Head of caudate nucleus (tissue), 42 donors: ENCODE measurements at regions of chr1 and their contacts with region 1.

Region 1: GRCh38 chr1:61043010-61043820 is 39.1 kb upstream of the NFIA start:
- DNase-seq: peak; percentile 77 to 96 (median 90)

Region 2: DNA sequence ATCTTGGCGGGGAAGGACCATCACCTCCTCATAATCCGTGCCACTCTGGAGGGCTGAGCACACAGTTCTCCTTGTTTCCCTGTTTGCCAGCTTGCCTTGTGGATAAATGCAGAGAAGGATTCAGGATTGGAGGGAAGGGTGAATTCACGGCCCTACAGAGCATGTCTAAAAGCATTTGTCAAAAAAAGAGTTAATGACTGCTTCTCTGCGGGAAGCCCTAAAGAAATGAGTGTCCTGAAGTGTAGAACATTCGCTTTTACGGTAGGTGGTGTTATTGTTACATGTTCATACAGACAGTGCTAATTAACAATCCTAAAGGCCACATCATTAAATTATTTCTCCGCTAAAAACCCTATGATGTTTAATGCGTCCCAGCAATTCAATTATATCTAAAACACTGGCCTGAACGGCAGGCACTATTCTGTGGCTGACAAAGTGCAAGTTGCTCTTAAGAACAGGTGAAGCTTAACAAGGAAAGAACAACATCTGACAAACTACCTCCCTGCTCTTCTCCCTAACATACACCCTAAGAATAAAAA is 73.2 kb before region 1 on chr1:
- intact Hi-C with region 1: loop called (anchors 5 kb)
- DNase-seq: peak in 6 of 42 donors; percentile 2 to 49 (median 22)

Region 3: GRCh38 chr1:60989749-60990713 is 53.2 kb before region 1 on chr1:
- intact Hi-C with region 1: no loop called
- DNase-seq: no peak